SK-N-SH (cell line): ENCODE measurements at regions of chr3 and their contacts with region 1.

Region 1: DNA sequence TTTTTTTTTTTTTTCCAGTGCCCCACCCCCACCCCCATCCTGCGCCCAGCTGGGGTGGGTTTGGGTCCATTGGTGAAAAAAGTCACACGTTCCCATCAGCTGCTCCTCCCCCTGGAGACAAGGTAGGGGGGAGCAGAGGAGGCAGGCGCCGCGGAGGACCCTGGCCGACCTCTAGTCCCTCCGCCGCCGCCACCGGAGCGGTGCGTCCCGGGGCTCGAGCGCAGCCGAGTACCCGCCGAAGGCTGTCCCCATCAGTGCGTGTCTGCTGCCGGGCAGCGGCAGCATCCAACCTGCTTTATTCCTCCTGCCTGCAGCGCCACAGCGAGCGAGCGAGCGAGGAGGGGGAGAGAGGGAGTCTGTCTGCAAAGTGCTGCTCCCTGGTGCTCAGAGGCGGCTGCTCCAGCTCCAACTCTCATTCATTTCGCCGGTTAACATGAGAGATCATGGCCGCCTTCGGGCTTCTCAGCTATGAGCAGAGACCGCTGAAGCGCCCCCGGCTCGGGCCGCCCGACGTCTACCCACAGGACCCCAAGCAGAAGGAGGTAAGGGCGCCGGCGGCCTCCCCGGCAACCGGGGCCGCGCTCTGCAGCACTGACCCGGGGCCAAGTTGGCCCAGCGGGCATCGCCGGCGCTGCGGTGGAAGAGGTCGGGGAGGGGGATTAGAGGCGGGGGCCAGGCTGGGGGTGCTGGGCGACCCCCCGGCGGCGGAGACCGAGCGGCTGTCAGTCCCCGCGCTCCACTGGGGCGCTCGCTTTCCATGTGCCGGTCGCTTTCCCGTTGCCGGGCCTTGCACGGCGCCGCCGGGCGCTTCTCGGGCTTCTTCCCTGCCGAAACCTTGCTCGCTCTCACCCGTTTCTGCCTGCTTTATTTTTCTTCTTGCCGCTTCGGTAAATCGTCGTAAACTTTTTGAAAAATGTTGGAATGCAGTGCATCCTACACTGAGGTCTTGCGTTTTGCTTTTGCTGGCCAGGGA is 1.3 kb downstream of the MED12L start:
- DNase-seq: peak; percentile 89
- H3K4me3 ChIP-seq: peak overlapping the region; percentile 57 to 65
- H3K27ac ChIP-seq: no peak overlapping the region
- H3K4me1 ChIP-seq: peaks cover 0 to 5% of the 10 kb centered on the region in 2 experiments; a peak in 1 of 4 replicates
- H3K27me3 ChIP-seq: peaks cover 78% of the 10 kb centered on the region
- CTCF ChIP-seq: peak; percentile 57
- EP300 ChIP-seq: no peak
- RAD21 ChIP-seq: peak; percentile 35

Region 2: GRCh38 chr3:151067158-151067557 is 19.6 kb before region 1 on chr3:
- CTCF ChIA-PET with region 1: interaction called, 15 read pairs
- POLR2A ChIA-PET with region 1: no interaction called
- DNase-seq: no peak
- H3K4me3 ChIP-seq: no peak overlapping the region
- H3K27ac ChIP-seq: no peak overlapping the region
- H3K4me1 ChIP-seq: no peaks in the 10 kb centered on the region
- H3K27me3 ChIP-seq: no peaks in the 10 kb centered on the region; the same call in 1 of the 2 replicates
- CTCF ChIP-seq: no peak
- EP300 ChIP-seq: no peak
- RAD21 ChIP-seq: peak; percentile 33; the same call in 1 of the 2 replicates